Calu3 (cell line): ENCODE measurements at regions of chr2 and their contacts with region 1.

Region 1: DNA sequence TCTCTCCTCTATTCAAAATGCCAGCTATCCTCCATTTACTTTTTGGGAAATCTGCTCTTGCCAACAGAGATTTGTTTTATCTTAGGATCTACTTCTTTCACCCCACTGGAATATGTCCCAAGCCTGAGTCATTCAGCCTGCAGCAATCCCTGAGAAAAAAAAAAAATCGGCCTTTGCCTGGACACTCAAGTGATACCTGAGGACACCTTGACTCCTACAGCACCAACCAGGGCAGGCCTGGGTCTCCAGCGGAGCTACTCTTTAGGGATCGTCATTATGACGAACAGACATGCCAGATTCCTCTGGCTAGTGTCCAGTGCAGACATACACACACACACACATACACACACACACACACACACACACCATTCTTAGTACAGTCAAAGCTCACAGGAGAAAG is 2.3 kb upstream of the UGT1A6 start:
- DNase-seq: peak; percentile 38
- H3K4me3 Mint-ChIP-seq: peak overlapping the region; percentile 81
- H3K27ac Mint-ChIP-seq: peak overlapping the region; percentile 65
- H3K4me1 Mint-ChIP-seq: peaks cover 77% of the 10 kb centered on the region
- H3K27me3 Mint-ChIP-seq: no peaks in the 10 kb centered on the region
- CTCF ChIP-seq: no peak

Region 2: DNA sequence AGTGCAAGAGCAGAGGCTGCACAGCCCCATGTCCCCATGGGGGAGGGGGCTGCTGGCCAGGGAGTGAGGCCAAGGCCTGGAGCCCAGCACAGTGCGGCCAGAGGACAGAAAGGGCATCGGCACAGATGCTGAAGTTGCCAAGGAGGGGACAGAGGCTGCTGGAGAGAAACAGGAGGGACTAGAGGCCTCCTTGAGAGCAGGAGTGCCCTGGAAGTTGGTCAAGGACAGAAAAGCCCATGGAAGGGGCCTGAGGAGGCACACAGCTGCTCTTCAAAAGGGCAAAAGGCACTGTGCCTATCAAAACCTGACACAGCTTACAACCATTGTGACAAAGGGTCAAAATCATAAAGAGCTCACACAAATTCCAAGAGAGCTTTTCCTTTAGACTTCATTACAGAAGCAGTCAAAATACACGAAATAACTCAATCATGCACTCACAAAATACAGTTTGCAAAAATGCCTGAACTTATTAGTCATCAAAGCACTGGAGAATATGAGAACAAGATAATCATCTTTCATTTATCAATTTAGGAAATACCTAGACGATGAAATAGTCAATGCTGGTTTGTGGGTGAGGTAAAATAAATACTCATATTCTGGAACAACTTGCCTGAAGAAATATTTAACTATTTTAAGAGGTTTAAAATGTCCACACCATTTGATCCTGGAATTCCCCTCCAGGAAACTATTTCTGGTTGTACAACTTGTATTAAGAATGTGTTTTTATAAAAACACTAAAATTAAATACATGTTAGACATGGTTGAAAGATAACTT is 203.5 kb before region 1 on chr2:
- CTCF ChIA-PET with region 1: no interaction called
- intact Hi-C with region 1: loop called (anchors 5 kb)
- DNase-seq: peak; percentile 26
- H3K4me3 Mint-ChIP-seq: peak overlapping the region; percentile 39
- H3K27ac Mint-ChIP-seq: peak overlapping the region; percentile 91
- H3K4me1 Mint-ChIP-seq: peaks cover 46% of the 10 kb centered on the region
- H3K27me3 Mint-ChIP-seq: no peaks in the 10 kb centered on the region
- CTCF ChIP-seq: no peak

Region 3: DNA sequence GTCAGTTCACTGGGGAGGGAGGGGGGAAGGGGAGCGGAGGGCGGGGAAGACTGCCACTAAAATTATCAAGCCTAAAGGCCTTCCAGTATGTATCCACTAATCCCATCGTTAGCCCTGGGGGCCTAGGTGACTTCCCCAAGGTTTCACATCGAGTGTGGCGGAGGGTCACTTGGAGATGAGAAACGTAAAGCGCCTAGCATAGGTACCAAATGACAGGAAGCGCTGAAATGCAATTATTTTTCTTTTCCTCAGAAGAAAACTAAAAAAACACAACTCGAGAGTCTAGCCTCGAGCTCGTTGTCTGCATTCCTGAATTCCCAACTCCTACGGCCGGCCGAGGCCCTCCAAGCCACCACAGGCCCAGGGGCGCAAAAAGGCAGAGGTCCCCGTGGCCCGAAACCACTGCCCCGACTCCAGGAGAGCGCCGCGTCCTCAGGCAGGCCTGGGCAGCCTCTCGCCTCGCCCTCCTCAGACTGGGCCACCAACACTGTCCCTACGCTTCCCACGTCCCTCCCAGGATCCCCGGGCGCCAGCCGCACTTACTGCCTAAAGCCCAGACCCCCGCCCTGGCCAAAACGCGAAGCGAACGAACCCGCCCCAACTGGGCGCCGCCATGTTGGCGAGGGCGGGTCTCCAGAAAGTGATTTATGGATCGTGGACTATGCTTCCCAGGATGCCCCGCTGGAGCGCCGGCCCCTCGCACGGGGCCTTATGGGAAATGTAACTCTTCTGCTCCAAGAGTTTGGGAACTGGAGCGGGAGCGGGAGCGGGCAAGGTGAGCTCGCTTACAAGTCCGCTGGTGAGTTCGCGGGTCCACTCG is 124.1 kb before region 1 on chr2 and contains the start of gene USP40:
- CTCF ChIA-PET with region 1: interaction called, 3 read pairs
- intact Hi-C with region 1: loop called (anchors 5 kb)
- DNase-seq: peak; percentile 88
- H3K4me3 Mint-ChIP-seq: peak within 1 kb of the TSS; percentile 97
- H3K27ac Mint-ChIP-seq: peak within 1 kb of the TSS; percentile 89
- H3K4me1 Mint-ChIP-seq: no peaks in the 10 kb centered on the region
- H3K27me3 Mint-ChIP-seq: no peaks in the 10 kb centered on the region
- CTCF ChIP-seq: no peak
- total RNA-seq, gene USP40: 44.2 and 45.8 TPM in 2 replicates

Region 4: DNA sequence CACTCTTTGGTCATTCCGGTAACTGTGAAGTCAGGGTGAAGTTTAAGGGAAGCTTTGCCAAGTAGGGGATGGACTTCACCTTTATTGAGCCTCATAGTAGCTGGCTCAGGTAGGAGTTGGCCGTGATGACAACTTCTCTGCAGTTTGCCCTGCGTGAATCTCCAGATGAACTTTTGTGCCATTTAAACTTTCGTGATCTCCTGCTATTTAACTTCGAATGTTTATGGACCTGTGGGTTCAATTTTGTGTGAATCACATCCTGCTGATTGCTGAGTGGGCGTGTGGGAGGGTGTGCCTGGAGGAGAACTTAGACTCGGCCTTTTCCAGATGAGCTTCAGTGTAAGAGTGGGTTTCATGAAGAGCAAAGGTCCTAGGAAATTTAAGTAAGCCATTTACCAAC is 73.8 kb after region 1 on chr2:
- CTCF ChIA-PET with region 1: interaction called, 3 read pairs
- intact Hi-C with region 1: loop called (anchors 5 kb)
- DNase-seq: peak; percentile 7
- H3K4me3 Mint-ChIP-seq: peak overlapping the region; percentile 45
- H3K27ac Mint-ChIP-seq: peak overlapping the region; percentile 50
- H3K4me1 Mint-ChIP-seq: peaks cover 68% of the 10 kb centered on the region
- H3K27me3 Mint-ChIP-seq: no peaks in the 10 kb centered on the region
- CTCF ChIP-seq: no peak